ENCODE measurements at regions of chr1 and their contacts with region 1.

Region 1: GRCh38 chr1:11037740-11038182 is 9.3 kb downstream of the MASP2 start:
- DNase-seq: peak; percentile 95
- ATAC-seq: peak; percentile 99
- H3K4me3 Mint-ChIP-seq: no peak overlapping the region
- H3K27ac Mint-ChIP-seq: no peak overlapping the region
- H3K4me1 Mint-ChIP-seq: peaks cover 7% of the 10 kb centered on the region
- H3K27me3 Mint-ChIP-seq: no peaks in the 10 kb centered on the region

Region 2: DNA sequence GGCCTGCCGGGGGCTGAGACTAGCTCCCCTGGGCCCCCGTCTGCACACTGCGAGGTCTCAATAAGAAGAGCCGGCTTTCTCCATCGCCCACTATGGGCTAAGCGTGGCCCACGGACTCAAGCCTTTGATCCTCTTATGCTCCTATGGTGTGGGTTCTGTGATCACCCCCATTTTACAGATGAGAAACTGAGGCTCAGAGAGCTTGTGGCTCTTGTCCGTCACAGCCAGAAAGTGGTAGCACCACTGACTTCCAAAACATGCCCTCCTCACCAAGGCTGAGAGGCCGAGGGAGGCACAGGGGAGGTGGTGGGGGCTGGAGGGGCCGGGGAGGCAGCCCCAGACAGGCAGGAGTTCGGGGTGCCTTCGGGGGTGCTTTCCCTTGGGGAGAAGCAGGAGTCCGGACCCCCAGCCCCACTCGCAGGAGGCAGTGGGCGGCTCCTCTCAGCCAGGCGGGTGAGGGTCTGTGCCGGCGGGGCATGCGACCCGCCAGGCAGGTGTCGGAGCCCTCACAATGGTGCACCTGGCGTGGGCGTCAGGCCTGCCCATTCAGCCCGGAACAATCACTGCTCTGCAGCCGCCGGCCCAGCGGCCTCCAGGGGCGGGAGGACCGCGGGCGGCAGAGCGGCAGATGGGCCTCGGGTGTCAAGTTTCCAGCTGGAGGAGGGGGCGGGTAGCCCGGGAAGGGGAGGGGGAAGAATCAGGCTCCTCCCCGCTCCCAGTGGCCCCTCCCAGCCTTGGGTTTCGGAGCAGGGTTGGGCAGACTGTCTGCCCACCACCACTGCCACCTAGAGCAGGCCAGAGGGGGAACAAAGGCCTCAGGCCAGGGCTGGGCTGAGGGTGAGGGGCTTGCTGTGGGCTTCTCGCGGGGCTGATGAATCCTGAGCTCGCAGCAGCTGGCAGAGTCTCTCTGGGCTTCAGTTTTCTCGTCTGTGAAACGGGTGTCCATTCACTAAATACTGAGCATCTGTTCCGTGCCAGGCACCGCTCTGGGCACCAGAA is 202.0 kb before region 1 on chr1:
- CTCF ChIA-PET with region 1: no interaction called
- POLR2A ChIA-PET with region 1: no interaction called
- intact Hi-C with region 1: no loop called
- DNase-seq: peak; percentile 35
- ATAC-seq: peak; percentile 49
- H3K4me3 Mint-ChIP-seq: no peak overlapping the region
- H3K27ac Mint-ChIP-seq: no peak overlapping the region
- H3K4me1 Mint-ChIP-seq: no peaks in the 10 kb centered on the region
- H3K27me3 Mint-ChIP-seq: peaks cover 30% of the 10 kb centered on the region

Region 3: DNA sequence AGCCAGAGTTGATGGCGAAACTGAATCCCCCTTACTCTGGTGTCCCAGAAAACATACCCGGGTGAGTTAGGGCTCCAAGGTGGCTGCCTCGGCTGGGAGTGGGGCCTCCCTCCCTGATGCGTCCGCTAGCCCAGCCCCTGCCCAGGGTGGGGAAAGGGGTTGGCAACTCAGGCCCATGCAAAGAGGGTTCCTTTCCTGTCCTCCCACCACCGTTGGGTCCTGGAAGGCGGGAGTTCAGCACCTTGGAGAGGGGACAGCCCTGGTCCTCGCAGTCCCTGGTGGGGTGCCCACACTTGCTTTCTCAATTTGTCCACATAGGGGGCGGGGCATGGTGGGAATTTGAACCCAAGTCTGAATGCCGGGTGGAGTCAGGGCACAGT is 16.0 kb after region 1 on chr1:
- CTCF ChIA-PET with region 1: interaction called, 17 read pairs
- POLR2A ChIA-PET with region 1: no interaction called
- intact Hi-C with region 1: no loop called
- DNase-seq: peak; percentile 49
- ATAC-seq: peak; percentile 21
- H3K4me3 Mint-ChIP-seq: no peak overlapping the region
- H3K27ac Mint-ChIP-seq: no peak overlapping the region
- H3K4me1 Mint-ChIP-seq: peaks cover 13% of the 10 kb centered on the region
- H3K27me3 Mint-ChIP-seq: no peaks in the 10 kb centered on the region

Region 4: DNA sequence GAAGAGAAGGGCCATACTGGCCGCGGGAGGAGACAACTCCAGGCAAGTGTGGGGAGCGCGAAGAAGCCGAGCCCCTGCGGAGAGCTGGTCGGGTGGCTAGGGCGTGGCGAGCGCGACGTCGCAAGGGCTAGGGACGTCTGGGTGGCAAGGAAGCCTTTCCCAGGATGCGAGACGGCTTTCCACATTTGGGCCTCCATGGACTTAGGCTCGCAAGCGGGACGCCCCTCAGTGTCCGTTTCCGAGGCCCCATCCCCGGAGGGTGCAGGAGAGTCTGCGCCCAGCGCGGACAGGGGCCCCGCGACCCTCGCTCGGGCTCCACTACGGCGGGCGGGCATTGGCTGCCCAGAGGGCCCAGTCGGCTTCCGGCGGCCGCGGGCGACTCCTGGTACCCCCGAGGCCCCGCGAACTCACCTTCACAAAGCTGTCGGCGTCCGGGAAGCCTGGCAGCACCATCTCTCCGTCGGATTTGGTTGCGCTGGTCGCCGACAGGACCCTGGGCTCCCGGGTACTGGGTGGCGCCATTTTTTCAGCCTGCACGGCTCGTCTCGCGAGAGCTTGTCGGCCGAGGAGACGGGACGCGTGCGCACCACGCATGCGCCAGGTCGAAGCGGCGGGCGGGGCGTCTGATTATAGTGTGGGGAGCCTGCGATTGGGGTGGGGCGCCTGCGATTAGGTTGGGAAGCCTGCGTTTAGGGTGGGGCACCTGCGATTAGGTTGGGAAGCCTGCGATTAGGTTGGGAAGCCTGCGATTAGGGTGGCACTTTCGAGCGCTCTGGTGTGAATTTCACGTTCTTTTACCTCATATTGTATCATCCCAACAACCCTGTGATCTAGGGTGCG is 61.8 kb after region 1 on chr1 and contains the start of gene EXOSC10:
- CTCF ChIA-PET with region 1: interaction called, 25 read pairs
- POLR2A ChIA-PET with region 1: interaction called, 8 read pairs
- intact Hi-C with region 1: loop called in 1 of 2 experiments (anchors 1 kb)
- DNase-seq: peak; percentile 97
- ATAC-seq: peak; percentile 98
- H3K4me3 Mint-ChIP-seq: peak within 1 kb of the TSS; percentile 95
- H3K27ac Mint-ChIP-seq: peak within 1 kb of the TSS; percentile 92
- H3K4me1 Mint-ChIP-seq: peaks cover 11% of the 10 kb centered on the region
- H3K27me3 Mint-ChIP-seq: no peaks in the 10 kb centered on the region
- total RNA-seq, gene EXOSC10: 74.3 to 89.6 TPM

Region 5: GRCh38 chr1:11227106-11228077 is 189.6 kb after region 1 on chr1:
- CTCF ChIA-PET with region 1: interaction called, 18 read pairs
- POLR2A ChIA-PET with region 1: no interaction called
- intact Hi-C with region 1: no loop called
- DNase-seq: no peak
- ATAC-seq: no peak
- H3K4me3 Mint-ChIP-seq: no peak overlapping the region
- H3K27ac Mint-ChIP-seq: peak overlapping the region; percentile 49
- H3K4me1 Mint-ChIP-seq: peaks cover 11% of the 10 kb centered on the region
- H3K27me3 Mint-ChIP-seq: no peaks in the 10 kb centered on the region

Region 6: DNA sequence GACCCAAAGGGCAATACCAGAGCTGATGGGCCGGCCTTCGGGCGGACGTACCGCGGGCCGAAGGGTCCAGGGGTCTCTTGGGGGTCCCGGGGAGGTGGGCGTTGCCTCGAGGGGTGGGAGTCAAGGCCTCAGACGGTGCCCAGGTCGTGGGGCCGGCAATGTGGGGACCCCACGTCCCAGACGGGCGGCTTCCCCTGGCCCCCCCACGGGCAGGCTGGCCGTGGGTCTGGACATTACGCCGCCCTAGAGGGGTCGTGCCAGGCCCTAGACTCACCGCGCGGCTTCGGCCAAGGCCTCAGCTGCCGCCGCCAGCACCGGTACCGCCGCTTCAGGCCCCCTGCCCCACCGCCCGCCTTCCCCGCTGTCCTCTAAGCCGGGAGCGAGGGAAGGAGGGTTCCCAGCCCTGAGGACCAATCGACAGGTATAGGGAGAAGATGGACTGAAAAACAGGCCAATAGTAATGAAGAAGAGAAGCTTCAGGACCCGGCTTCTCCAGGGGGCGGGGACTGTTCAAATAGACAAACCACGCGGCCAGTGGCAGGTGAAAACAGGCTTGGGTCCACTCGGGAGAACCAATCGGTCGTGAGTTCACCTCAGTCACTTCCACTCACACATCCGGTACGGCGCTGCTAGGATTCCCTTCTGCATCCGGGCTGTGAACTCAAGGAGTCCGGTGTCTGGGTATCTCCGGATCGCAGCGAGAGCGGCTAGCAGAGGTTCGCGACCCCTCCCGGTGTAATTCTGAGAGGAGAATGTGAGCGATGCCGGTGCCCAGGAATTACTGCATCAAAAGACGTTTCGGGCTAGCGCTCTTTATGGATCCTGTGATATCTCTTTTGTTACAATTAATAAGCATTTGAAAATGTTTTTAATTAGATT is 224.6 kb after region 1 on chr1 and contains the start of gene MTOR:
- CTCF ChIA-PET with region 1: interaction called, 12 read pairs
- POLR2A ChIA-PET with region 1: no interaction called
- intact Hi-C with region 1: no loop called
- DNase-seq: peak; percentile 98
- ATAC-seq: peak; percentile 98
- H3K4me3 Mint-ChIP-seq: peak within 1 kb of the TSS; percentile 90
- H3K27ac Mint-ChIP-seq: peak within 1 kb of the TSS; percentile 87
- H3K4me1 Mint-ChIP-seq: peaks cover 15% of the 10 kb centered on the region
- H3K27me3 Mint-ChIP-seq: no peaks in the 10 kb centered on the region
- total RNA-seq, gene MTOR: 32.3 to 36.3 TPM

Region 7: GRCh38 chr1:11645670-11646265 is 608.0 kb after region 1 on chr1:
- CTCF ChIA-PET with region 1: interaction called, 34 read pairs
- POLR2A ChIA-PET with region 1: interaction called, 3 read pairs
- intact Hi-C with region 1: loop called (anchors 1 kb)
- DNase-seq: peak; percentile 93
- ATAC-seq: peak; percentile 57
- H3K4me3 Mint-ChIP-seq: no peak overlapping the region
- H3K27ac Mint-ChIP-seq: no peak overlapping the region
- H3K4me1 Mint-ChIP-seq: peaks cover 10% of the 10 kb centered on the region
- H3K27me3 Mint-ChIP-seq: no peaks in the 10 kb centered on the region

Region 8: DNA sequence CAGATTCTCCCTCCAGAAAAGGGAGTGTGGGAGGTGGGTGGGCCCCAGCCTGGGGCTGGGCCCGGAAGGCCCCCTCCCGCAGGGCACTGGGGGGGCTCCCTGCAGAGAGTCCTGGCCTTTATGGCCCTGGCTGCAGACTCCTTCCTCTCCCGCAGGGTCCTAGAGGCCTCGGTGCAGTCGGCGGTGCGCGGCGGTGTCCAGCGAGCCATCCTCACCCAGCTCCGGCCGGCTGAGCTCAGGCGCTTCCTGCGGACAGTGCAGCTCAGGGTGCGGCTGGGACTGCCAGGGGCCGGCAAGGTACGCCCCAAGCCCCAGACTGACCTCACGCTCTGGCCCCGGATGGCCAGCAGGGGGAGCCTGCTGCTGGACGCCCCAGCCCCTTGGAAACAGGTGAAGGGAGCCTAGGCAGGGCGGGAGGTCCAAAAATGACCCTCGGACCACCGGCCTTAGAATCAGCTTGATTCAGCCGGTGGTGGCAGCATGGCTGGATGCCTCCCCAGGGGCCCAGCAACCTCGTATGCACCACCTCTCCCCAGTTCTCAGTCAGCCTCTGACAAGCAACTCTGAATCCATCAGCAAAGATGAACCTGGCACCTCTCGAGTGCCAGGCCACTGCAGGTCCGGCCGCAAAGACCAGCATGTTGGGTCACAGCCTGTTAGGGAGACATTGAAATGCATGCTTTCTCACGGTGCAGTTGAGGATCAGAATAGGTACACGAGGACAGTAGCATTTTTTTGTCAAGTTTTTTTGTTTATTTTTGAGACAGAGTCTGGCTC is 747.4 kb after region 1 on chr1:
- CTCF ChIA-PET with region 1: no interaction called
- POLR2A ChIA-PET with region 1: no interaction called
- intact Hi-C with region 1: no loop called
- DNase-seq: peak; percentile 62
- ATAC-seq: peak; percentile 82
- H3K4me3 Mint-ChIP-seq: no peak overlapping the region
- H3K27ac Mint-ChIP-seq: no peak overlapping the region
- H3K4me1 Mint-ChIP-seq: peaks cover 5% of the 10 kb centered on the region
- H3K27me3 Mint-ChIP-seq: no peaks in the 10 kb centered on the region